ENCODE measurements at regions of chr18 and their contacts with region 1.

Region 1: GRCh38 chr18:74579496-74580065 is 18.1 kb upstream of the ZNF407 start:
- DNase-seq: no peak
- ATAC-seq: no peak
- H3K4me3 ChIP-seq: no peak overlapping the region
- H3K4me3 Mint-ChIP-seq: no peak overlapping the region
- H3K27ac ChIP-seq: no peak overlapping the region
- H3K27ac Mint-ChIP-seq: no peak overlapping the region
- H3K4me1 ChIP-seq: no peaks in the 10 kb centered on the region
- H3K4me1 Mint-ChIP-seq: peaks cover 0 to 2% (median 0%) of the 10 kb centered on the region in 7 donors
- H3K27me3 ChIP-seq: no peaks in the 10 kb centered on the region
- H3K27me3 Mint-ChIP-seq: peaks cover 2 to 44% (median 15%) of the 10 kb centered on the region in 5 donors

Region 2: GRCh38 chr18:74609535-74609934 is 30.0 kb after region 1 on chr18:
- CTCF ChIA-PET with region 1: no interaction called
- POLR2A ChIA-PET with region 1: no interaction called
- intact Hi-C with region 1: loop called in 1 of 2 experiments (anchors 1 kb)
- DNase-seq: no peak
- ATAC-seq: no peak
- H3K4me3 ChIP-seq: no peak overlapping the region
- H3K4me3 Mint-ChIP-seq: no peak overlapping the region
- H3K27ac ChIP-seq: no peak overlapping the region
- H3K27ac Mint-ChIP-seq: no peak overlapping the region
- H3K4me1 ChIP-seq: peaks cover 0 to 8% of the 10 kb centered on the region in 2 donors
- H3K4me1 Mint-ChIP-seq: peaks cover 6 to 67% (median 50%) of the 10 kb centered on the region in 7 donors
- H3K27me3 ChIP-seq: no peaks in the 10 kb centered on the region
- H3K27me3 Mint-ChIP-seq: no peaks in the 10 kb centered on the region

Measured in naive thymus-derived CD4-positive, alpha-beta T cell (primary cell).